Panc1 (cell line): ENCODE measurements at regions of chr15 and their contacts with region 1.

Region 1: DNA sequence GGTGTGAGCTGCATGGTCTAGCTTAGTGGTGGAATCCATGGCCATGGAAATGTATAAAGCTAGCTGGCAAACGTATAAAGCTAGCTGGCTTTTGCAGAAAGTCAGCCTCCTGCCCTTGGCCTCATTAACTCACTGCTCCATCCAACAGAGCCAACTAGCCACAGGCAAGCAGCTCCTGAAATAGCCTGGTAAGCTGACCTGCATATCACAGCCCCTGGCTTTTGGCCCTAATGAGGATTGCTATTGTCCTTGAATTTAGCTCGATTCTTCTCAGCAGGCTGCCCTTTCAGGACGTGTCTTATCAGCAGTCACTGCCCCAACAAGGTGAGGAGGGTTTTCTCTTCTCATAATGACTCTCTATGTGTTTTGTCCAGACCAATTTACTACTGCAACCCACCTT is 446.8 kb downstream of the WDR72 start:
- DNase-seq: no peak
- ATAC-seq: no peak
- H3K4me3 ChIP-seq: no peak overlapping the region
- H3K27ac ChIP-seq: no peak overlapping the region
- H3K4me1 ChIP-seq: no peaks in the 10 kb centered on the region
- H3K27me3 ChIP-seq: no peaks in the 10 kb centered on the region
- CTCF ChIP-seq: no peak

Region 2: DNA sequence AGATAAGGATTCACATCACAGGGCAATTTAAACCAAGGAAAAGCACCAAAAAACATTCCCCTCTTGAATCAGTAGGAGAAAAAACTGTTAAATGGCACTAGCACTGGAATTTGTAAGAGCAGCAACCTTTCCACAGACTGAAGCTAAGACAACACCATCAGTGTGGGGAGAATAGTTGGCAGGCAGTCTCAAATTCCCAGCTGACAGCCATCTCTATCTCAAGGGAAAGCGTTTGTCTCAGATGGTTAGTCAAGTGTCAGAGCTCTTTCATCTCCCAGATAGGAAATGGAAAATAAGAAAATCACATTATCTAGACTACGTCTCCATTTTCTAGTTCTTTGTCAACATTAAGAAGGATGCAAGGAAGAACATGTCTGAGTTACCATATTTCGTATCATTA is 218.1 kb after region 1 on chr15:
- CTCF ChIA-PET with region 1: no interaction called
- POLR2A ChIA-PET with region 1: interaction called, 11 read pairs
- in situ Hi-C with region 1: no loop called
- intact Hi-C with region 1: no loop called
- DNase-seq: no peak
- ATAC-seq: no peak
- H3K4me3 ChIP-seq: no peak overlapping the region
- H3K27ac ChIP-seq: no peak overlapping the region
- H3K4me1 ChIP-seq: no peaks in the 10 kb centered on the region
- H3K27me3 ChIP-seq: no peaks in the 10 kb centered on the region
- CTCF ChIP-seq: no peak

Region 3: GRCh38 chr15:54187325-54187724 is 874.6 kb after region 1 on chr15:
- CTCF ChIA-PET with region 1: no interaction called
- POLR2A ChIA-PET with region 1: no interaction called
- in situ Hi-C with region 1: no loop called
- intact Hi-C with region 1: no loop called
- DNase-seq: no peak
- ATAC-seq: no peak
- H3K4me3 ChIP-seq: no peak overlapping the region
- H3K27ac ChIP-seq: no peak overlapping the region
- H3K4me1 ChIP-seq: no peaks in the 10 kb centered on the region
- H3K27me3 ChIP-seq: no peaks in the 10 kb centered on the region
- CTCF ChIP-seq: no peak